Gastrocnemius medialis (tissue), 4 donors: ENCODE measurements at regions of chr2 and their contacts with region 1.

Region 1: DNA sequence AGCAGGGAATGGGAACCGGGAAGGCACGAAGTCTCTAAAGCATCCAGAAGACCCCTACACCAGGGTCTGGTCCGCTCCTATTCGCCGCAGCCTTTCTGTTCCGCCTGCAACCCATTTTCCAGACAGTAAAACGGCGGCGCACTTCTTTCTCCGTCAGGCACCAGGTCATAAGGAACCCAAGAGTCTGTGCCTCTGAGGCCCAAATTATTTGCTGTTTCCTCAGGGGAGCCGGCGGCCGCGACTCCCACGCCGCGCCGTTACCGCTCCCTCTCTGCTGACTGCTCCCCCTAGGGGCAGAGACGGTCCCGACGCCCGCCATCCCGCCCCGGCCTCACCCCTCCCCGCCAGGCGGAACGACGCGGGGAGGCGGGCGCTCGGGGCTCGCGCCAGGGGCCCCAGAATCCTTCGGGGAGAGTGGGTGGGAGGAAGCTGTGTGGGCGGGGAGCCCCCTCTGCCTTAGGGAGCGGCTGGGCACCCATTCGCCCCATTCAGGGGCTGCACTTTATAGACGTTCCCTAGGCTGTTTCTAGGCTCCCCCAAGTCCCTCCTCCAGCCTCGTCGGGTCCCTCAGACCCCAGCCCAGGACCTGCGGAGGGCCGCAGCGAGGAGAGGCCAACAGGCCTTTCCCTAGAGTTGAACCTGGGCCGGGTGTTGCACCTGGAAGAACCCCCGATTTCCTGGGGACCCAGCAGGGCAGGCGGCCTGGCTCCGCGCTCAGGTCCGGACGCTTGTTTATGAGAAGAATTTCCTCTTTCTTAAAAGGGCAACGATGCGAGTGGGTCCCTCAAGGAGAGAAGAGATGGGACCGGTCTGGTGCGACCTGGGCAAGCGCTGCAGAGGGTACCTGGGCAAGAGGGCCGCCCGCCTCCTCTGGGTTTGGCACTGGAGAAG is 3.6 kb upstream of the CTDSP1 start:
- DNase-seq: peak; percentile 81 to 91
- ATAC-seq: peak; percentile 57 to 59
- H3K4me3 ChIP-seq: peak overlapping the region; percentile 87 to 99 (median 93)
- H3K27ac ChIP-seq: peak overlapping the region; percentile 97 to 100 (median 98)
- H3K4me1 ChIP-seq: peaks cover 16 to 29% of the 10 kb centered on the region in 2 donors
- H3K27me3 ChIP-seq: no peaks in the 10 kb centered on the region
- CTCF ChIP-seq: peak; percentile 92 to 99 (median 95)
- POLR2A ChIP-seq: peak; percentile 30 to 44

Region 2: DNA sequence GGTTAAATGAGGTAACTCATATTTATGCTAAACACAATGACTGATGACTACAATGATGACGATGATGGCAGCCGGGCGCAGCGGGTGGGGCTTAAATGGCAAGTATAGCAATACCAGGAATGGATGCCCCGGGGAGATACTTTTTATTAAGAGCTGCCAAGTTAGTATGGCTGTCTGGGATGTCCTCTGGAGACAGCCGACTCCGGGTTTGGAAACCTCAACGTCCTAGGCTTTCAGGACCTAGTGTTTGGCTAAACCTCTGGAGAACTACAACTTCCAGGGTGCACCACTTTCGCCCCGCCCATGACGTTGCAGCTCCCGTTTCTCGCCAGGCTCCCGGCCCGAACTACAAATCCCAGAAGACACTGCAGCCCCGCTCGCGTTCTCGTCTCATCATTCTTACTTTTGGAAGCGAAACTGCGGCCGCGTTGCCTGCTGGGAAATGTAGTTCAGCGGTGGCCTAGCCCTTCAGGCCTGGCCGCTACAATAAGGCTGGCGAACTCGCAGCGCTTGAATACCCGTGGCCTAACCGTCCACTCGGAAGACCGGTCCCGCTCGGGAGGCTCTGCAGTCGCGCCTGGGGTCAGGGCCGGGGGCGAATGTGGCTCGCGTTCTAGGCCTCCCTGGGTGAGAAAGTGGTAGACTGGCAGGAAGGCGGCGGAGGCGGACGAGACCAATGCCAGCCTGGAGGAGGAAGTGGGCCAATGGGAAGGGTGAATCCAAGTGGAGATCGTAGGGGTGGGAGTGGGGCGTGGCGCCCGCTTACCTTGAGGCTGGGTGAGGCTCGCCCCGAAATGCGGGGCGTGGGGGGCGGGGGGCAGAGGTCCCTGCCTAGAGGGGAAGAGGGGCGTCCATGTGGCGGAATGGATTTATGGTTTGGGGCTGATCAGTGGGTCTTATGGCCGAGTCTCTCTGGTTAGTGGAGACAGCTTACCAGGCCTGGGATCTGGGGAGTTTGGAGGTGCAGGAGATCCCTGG is 1983.7 kb before region 1 on chr2 and contains the start of gene SMARCAL1:
- in situ Hi-C with region 1: no loop called
- intact Hi-C with region 1: loop called (anchors 5 kb)
- DNase-seq: peak; percentile 98 to 99
- ATAC-seq: peak; percentile 96 to 97
- H3K4me3 ChIP-seq: peak within 1 kb of the TSS; percentile 91 to 98 (median 92)
- H3K27ac ChIP-seq: peak within 1 kb of the TSS; percentile 97 to 100 (median 98)
- H3K4me1 ChIP-seq: peaks cover 9 to 10% of the 10 kb centered on the region in 2 donors
- H3K27me3 ChIP-seq: no peaks in the 10 kb centered on the region
- CTCF ChIP-seq: no peak
- POLR2A ChIP-seq: peak; percentile 26 to 33
- total RNA-seq, gene SMARCAL1: 5.8 to 20.7 (median 7.8) TPM

Region 3: DNA sequence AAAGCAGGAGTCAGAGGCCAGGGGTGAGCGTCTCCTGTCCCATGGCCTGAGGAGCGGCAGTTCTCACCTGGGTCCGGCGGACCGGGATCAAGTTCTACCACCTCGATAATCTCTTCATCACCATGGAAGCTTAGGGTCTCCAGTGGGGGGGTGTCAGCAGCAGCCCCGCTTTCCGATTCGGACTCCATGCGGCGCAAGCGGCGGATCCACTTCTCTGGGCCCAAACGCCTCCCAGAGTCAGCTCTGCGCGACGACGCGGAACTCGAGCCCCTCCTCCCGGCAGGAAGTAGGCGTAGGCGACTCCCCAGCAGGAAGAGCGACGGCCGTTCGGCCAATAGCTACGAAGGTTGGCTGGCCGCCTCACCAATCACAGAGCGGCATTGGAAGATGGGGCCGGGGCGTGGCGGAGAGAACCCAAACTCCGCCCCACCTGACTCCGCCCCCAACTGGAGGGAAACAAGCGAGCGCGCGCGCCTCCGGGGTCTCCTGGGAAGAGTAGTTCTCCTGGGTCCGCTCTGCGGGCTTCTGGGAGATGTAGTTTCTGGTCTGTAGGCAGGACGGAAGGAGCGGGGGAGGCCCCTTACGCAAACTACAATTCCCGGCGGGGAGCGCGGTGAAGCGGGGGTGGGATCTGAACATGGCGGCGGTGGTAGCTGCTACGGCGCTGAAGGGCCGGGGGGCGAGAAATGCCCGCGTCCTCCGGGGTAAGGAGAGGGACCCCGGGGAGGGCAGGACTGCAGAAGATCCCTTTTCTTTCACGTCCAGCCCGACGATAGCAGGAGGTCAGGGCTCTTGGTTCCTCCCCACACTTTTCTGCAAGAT is 125.9 kb before region 1 on chr2 and contains the starts of genes AAMP and PNKD:
- in situ Hi-C with region 1: loop called in 1 of 4 experiments (anchors 10 kb)
- intact Hi-C with region 1: loop called (anchors 1 kb)
- DNase-seq: peak; percentile 99 to 100
- ATAC-seq: peak; percentile 88 to 89
- H3K4me3 ChIP-seq: peak within 1 kb of the TSS; percentile 88 to 97 (median 90)
- H3K27ac ChIP-seq: peak within 1 kb of the TSS; percentile 86 to 94 (median 90)
- H3K4me1 ChIP-seq: peaks cover 38 to 51% of the 10 kb centered on the region in 2 donors
- H3K27me3 ChIP-seq: no peaks in the 10 kb centered on the region
- CTCF ChIP-seq: peak in 3 of 5 experiments; percentile 10 to 18 (median 10)
- POLR2A ChIP-seq: peak; percentile 89 to 91
- total RNA-seq, gene AAMP: 87.1 to 134 (median 96.0) TPM
- total RNA-seq, gene PNKD: 20.1 to 35.8 (median 31.9) TPM

Region 4: GRCh38 chr2:218301176-218301819 is 94.7 kb before region 1 on chr2:
- in situ Hi-C with region 1: no loop called
- intact Hi-C with region 1: loop called (anchors 1 kb)
- DNase-seq: peak; percentile 56 to 69
- ATAC-seq: peak; percentile 87
- H3K4me3 ChIP-seq: no peak overlapping the region
- H3K27ac ChIP-seq: no peak overlapping the region
- H3K4me1 ChIP-seq: no peaks in the 10 kb centered on the region
- H3K27me3 ChIP-seq: no peaks in the 10 kb centered on the region
- CTCF ChIP-seq: peak; percentile 93 to 98 (median 95)
- POLR2A ChIP-seq: no peak

Region 5: DNA sequence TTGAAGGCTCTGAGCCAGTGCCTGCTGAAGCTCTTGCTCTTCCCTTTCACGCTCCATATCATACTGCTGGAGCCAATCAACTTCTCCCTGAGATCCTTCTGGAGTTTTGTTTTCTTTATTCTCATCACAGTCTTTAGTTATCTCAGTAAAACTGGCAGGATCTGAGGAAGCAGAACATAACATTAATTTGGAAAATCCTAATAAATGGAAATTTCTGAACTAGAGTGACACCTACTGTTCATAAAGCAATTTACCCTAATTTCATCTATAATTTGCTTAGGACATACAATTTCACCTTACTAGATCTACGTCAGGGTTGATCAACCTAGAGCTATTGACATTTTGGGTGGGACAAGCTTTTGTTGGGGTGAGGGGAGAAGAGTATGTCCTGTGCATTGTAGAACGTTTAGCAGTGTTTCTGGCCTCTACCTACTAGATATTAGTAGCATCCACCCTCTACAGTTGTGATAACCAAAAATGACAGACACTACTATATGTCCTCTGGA is 70.0 kb after region 1 on chr2:
- in situ Hi-C with region 1: no loop called
- intact Hi-C with region 1: no loop called
- DNase-seq: no peak
- ATAC-seq: no peak
- H3K4me3 ChIP-seq: no peak overlapping the region
- H3K27ac ChIP-seq: no peak overlapping the region
- H3K4me1 ChIP-seq: no peaks in the 10 kb centered on the region
- H3K27me3 ChIP-seq: no peaks in the 10 kb centered on the region
- CTCF ChIP-seq: peak in 4 of 5 experiments; percentile 27 to 47 (median 41)
- POLR2A ChIP-seq: no peak

Region 6: DNA sequence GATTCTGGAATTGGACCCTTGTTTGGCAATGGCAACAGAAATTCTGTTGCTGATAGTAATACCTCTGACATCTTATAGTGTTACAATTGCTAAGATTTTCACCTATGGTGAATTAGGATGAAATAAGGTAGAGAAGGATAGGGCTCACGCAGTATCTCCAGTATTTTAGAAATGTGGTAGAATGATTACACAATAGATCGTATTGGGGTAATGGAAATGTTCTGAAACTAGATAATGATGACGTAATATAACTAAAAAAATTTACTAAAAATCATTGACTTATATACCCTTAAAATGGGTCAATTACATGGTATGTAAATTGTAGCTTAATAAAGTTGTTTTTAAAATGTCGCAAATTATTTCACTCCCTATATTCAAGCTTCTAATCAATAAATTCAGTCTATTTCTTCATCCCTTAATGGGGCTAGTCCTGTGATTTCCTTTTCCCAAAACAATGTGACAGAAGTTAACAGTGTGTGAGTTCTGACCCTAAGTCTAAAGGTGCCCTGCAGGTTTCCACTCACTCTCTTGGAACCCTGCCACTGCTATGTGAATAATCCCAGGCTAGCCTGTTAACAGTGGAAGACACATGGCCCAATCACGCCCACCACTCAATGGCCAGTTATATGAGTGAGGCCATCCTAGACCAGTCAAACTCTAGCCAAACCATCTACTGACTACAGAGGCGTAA is 140.9 kb after region 1 on chr2:
- in situ Hi-C with region 1: no loop called
- intact Hi-C with region 1: no loop called
- DNase-seq: no peak
- ATAC-seq: no peak
- H3K4me3 ChIP-seq: no peak overlapping the region
- H3K27ac ChIP-seq: no peak overlapping the region
- H3K4me1 ChIP-seq: no peaks in the 10 kb centered on the region
- H3K27me3 ChIP-seq: no peaks in the 10 kb centered on the region
- CTCF ChIP-seq: no peak
- POLR2A ChIP-seq: no peak

Region 7: DNA sequence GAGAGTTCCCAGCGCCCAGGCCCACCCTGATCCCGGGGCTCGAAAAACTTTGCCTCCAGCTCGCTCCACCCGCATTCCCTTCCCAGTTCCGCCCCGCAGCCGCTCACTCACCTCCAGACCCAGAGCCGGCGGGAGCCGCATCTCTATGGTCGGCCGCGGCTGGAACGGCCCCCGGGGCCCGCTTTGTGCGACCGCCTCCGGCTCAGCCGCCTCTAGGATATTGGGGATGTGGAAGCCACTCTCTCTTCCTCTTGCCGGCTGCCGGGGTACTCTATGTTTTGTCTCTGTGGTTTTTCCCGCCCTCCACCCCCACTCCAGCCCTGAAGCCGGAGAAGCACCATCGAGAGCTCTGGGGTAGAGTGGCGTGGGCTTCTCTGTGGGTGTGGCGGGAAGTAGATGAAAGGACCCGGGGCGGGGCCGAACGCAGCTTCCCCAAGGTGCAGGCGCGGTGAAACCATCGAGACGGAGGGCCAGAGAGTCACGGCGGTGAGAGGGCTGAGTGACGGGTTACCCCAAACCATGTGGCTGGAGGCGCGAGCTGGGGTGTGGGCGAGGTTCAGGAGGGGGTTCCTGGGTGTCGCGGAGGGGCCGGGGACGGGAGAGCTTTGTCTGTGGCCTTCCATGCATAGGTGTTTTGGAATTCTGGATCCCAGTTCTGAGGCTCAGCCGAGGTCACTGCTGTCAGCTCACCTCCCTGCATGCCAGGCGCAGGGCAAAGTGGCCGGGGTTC is 263.4 kb after region 1 on chr2 and contains the starts of genes BCS1L and ZNF142:
- in situ Hi-C with region 1: loop called in 2 of 4 experiments (anchors 25 kb)
- intact Hi-C with region 1: loop called (anchors 5 kb)
- DNase-seq: peak; percentile 91 to 92
- ATAC-seq: peak; percentile 73 to 77
- H3K4me3 ChIP-seq: peak within 1 kb of the TSS; percentile 76 to 93 (median 84)
- H3K27ac ChIP-seq: peak within 1 kb of the TSS; percentile 95 to 98 (median 97)
- H3K4me1 ChIP-seq: peaks cover 41 to 45% of the 10 kb centered on the region in 2 donors
- H3K27me3 ChIP-seq: no peaks in the 10 kb centered on the region
- CTCF ChIP-seq: no peak
- POLR2A ChIP-seq: peak; percentile 89 to 90
- total RNA-seq, gene BCS1L: 19.6 to 46.9 (median 22.4) TPM
- total RNA-seq, gene ZNF142: 13.2 to 46.6 (median 34.0) TPM

Region 8: DNA sequence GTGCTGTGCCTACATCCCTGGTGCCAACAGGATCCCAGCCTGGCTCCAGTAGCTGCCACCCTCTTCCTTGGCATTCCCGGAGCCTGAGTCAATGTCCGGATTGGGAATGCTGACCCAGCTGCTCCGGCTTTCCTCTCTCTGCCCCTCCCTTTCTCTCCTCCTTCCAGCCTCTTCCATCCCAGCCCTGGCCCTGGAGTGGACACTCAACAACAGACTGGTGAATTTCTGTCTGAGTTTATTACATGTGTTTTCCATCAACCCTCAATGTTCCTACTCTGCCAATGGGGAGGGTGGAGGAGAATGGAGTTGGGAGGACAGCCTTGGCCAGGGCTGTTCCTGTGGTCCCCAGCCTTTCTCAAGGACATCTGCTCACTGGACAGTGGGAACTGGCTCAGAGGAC is 436.5 kb after region 1 on chr2:
- in situ Hi-C with region 1: no loop called
- intact Hi-C with region 1: loop called (anchors 10 kb)
- DNase-seq: peak; percentile 77 to 91
- ATAC-seq: peak; percentile 66 to 76
- H3K4me3 ChIP-seq: no peak overlapping the region
- H3K27ac ChIP-seq: peak overlapping the region; percentile 95
- H3K4me1 ChIP-seq: peaks cover 64 to 65% of the 10 kb centered on the region in 2 donors
- H3K27me3 ChIP-seq: no peaks in the 10 kb centered on the region
- CTCF ChIP-seq: no peak
- POLR2A ChIP-seq: no peak